ENCODE measurements at regions of chr17 and their contacts with region 1.

Region 1: GRCh38 chr17:8965394-8966168 is at the start of gene PIK3R5:
- DNase-seq: peak; percentile 81
- ATAC-seq: peak; percentile 77
- H3K4me3 Mint-ChIP-seq: peak within 1 kb of the TSS; percentile 97
- H3K27ac Mint-ChIP-seq: peak within 1 kb of the TSS; percentile 100
- H3K4me1 Mint-ChIP-seq: peaks cover 51% of the 10 kb centered on the region
- H3K27me3 Mint-ChIP-seq: no peaks in the 10 kb centered on the region
- CTCF ChIP-seq: peak; percentile 53
- total RNA-seq, gene PIK3R5: 46.7 to 50.4 TPM

Region 2: DNA sequence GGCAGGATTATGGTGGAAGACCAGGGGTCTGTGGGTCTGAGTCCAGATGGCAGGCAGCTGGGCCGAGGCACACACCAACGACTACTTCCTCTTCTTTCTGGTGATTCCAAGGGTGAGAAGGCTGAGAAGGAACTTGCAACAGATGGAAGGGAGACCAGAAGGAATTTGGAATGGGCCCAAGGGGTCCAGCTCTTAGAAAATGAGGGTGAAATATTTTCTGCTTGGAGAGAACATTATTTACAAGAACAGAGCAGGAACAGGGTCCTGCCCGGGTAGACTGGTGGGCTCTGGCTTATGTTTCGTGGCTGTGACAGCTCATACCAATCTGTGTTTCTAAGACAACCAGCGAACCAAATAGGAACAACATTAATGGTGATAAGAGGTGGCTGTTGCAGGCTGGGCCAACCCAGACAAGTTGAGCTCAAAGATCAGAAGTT is 257.5 kb before region 1 on chr17:
- CTCF ChIA-PET with region 1: no interaction called
- POLR2A ChIA-PET with region 1: no interaction called
- intact Hi-C with region 1: no loop called
- DNase-seq: no peak
- ATAC-seq: no peak
- H3K4me3 Mint-ChIP-seq: no peak overlapping the region
- H3K27ac Mint-ChIP-seq: no peak overlapping the region
- H3K4me1 Mint-ChIP-seq: no peaks in the 10 kb centered on the region
- H3K27me3 Mint-ChIP-seq: peaks cover 3% of the 10 kb centered on the region
- CTCF ChIP-seq: no peak

Region 3: DNA sequence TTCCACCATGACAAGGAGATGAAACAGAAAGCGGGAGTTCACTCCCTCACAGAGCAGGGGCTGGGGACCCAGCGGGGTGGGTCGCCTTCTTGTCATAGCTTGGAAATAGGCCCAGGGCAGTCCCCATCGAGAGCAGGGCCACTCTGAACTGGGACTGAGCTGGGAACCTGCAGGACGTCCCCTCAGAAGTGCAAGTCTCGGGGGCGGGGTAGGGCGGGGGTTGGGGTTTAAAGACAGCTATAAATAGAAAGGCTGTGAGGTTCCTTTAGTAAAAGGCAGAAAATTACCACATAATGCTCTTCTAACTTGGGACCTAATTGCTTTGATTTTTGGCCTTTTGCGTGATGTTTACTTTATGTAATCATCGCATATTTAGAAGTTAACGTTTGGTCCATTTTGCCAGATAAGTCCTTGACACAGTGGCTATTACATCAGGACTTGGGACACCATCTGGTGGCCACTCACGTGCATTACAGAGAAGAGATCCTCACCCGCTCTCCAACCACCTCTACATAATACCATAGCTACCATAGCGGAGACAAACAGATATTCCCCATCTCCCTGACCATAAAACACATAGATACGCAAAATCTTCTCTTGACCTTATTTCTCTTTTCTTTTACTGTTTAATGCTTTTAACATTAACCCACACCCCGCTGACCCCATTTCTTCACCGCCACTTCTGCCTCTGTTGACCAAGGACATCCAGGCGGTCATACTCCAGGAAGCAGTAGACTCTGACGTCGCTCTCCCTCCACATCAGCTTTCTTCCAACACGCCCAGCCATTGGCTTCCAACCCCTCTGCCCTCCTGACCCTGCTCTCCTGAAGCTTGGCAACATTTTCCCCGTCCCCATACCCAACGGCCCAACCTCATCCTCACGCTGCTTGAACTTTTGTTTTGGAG is 70.7 kb before region 1 on chr17:
- CTCF ChIA-PET with region 1: interaction called, 15 read pairs
- POLR2A ChIA-PET with region 1: interaction called, 12 read pairs
- intact Hi-C with region 1: no loop called
- DNase-seq: peak; percentile 77
- ATAC-seq: peak; percentile 60
- H3K4me3 Mint-ChIP-seq: no peak overlapping the region
- H3K27ac Mint-ChIP-seq: peak overlapping the region; percentile 60
- H3K4me1 Mint-ChIP-seq: peaks cover 69% of the 10 kb centered on the region
- H3K27me3 Mint-ChIP-seq: no peaks in the 10 kb centered on the region
- CTCF ChIP-seq: peak; percentile 84

Region 4: GRCh38 chr17:8900626-8901585 is 64.7 kb before region 1 on chr17:
- CTCF ChIA-PET with region 1: interaction called, 15 read pairs
- POLR2A ChIA-PET with region 1: interaction called, 12 read pairs
- intact Hi-C with region 1: no loop called
- DNase-seq: peak; percentile 65
- ATAC-seq: no peak
- H3K4me3 Mint-ChIP-seq: peak overlapping the region; percentile 42
- H3K27ac Mint-ChIP-seq: peak overlapping the region; percentile 91
- H3K4me1 Mint-ChIP-seq: peaks cover 67% of the 10 kb centered on the region
- H3K27me3 Mint-ChIP-seq: no peaks in the 10 kb centered on the region
- CTCF ChIP-seq: no peak

Region 5: DNA sequence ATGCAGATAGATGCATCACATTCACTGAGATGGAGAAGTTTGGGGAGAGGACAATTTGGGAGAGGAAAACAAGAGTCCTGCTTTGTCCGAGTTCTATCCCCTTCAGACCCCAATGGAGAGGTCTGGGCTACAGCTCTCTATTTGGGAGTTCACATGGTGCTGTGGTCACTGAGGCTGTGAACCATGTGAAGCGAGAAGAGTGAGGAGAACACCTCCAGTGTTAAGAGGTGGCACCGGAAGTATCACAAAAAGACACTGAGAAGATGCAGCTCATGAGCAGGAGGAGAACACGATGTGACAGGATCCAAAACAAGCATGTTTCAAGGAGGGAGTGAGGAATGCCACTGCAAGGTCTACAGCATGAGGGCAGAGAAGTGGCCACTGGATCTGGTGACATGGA is 39.8 kb before region 1 on chr17:
- CTCF ChIA-PET with region 1: interaction called, 5 read pairs
- POLR2A ChIA-PET with region 1: interaction called, 3 read pairs
- intact Hi-C with region 1: loop called (anchors 5 kb)
- DNase-seq: no peak
- ATAC-seq: no peak
- H3K4me3 Mint-ChIP-seq: no peak overlapping the region
- H3K27ac Mint-ChIP-seq: no peak overlapping the region
- H3K4me1 Mint-ChIP-seq: peaks cover 39% of the 10 kb centered on the region
- H3K27me3 Mint-ChIP-seq: no peaks in the 10 kb centered on the region
- CTCF ChIP-seq: no peak

Region 6: DNA sequence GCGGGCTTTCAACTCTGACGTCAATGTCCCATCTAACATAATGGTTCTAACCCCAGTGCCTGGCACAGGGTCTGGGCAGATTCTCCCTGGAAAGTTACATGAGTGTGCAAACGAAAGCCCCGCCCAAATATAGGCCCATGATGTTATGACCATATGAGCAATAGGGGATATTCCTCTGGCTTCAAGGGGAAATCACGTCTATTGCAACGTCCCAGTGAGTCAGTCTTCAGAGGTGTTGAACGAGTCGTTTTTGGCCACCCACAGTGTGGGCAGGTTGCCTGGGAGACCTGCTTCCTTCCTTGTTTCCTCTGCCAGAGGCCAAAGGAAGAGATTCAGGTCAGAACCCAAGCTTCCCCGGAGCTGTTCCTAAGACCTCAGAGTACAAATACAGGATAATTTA is 30.4 kb before region 1 on chr17:
- CTCF ChIA-PET with region 1: interaction called, 4 read pairs
- POLR2A ChIA-PET with region 1: interaction called, 333 read pairs
- intact Hi-C with region 1: no loop called
- DNase-seq: peak; percentile 93
- ATAC-seq: peak; percentile 83
- H3K4me3 Mint-ChIP-seq: peak overlapping the region; percentile 22
- H3K27ac Mint-ChIP-seq: peak overlapping the region; percentile 97
- H3K4me1 Mint-ChIP-seq: peaks cover 82% of the 10 kb centered on the region
- H3K27me3 Mint-ChIP-seq: no peaks in the 10 kb centered on the region
- CTCF ChIP-seq: no peak

Region 7: GRCh38 chr17:8949061-8949661 is 16.4 kb before region 1 on chr17:
- CTCF ChIA-PET with region 1: interaction called, 11 read pairs
- POLR2A ChIA-PET with region 1: interaction called, 333 read pairs
- intact Hi-C with region 1: no loop called
- DNase-seq: peak; percentile 58
- ATAC-seq: peak; percentile 61
- H3K4me3 Mint-ChIP-seq: peak overlapping the region; percentile 69
- H3K27ac Mint-ChIP-seq: peak overlapping the region; percentile 94
- H3K4me1 Mint-ChIP-seq: peaks cover 93% of the 10 kb centered on the region
- H3K27me3 Mint-ChIP-seq: no peaks in the 10 kb centered on the region
- CTCF ChIP-seq: no peak

Region 8: GRCh38 chr17:8954339-8954738 is 11.2 kb before region 1 on chr17:
- CTCF ChIA-PET with region 1: interaction called, 11 read pairs
- POLR2A ChIA-PET with region 1: interaction called, 333 read pairs
- intact Hi-C with region 1: no loop called
- DNase-seq: peak; percentile 87
- ATAC-seq: peak; percentile 79
- H3K4me3 Mint-ChIP-seq: peak overlapping the region; percentile 8
- H3K27ac Mint-ChIP-seq: peak overlapping the region; percentile 87
- H3K4me1 Mint-ChIP-seq: peaks cover 95% of the 10 kb centered on the region
- H3K27me3 Mint-ChIP-seq: no peaks in the 10 kb centered on the region
- CTCF ChIP-seq: no peak